BJ (cell line): ENCODE measurements at regions of chr16 and their contacts with region 1.

Region 1: GRCh38 chr16:28218104-28218503 is 6.3 kb upstream of the XPO6 start:
- DNase-seq: no peak
- H3K4me3 ChIP-seq: no peak overlapping the region
- H3K27me3 ChIP-seq: no peaks in the 10 kb centered on the region
- CTCF ChIP-seq: peak; percentile 76

Region 2: DNA sequence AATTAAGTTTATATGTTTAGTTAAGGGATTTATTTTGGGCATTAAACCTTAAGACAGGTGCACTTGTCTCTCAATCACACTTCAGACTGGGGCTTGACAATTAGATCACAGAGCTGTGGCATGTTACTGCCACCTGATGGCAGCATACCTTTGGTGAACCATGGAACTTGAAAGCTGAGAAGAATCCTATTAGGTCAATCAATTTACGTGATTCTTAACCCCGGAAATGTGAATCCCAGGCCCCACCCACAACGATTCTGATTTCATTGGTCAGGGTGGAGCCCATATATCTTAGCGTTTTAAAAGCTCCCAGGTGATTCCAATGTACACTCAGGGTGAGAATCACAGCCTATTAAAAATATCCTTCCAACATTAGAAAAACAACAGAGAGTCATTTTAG is 245.6 kb before region 1 on chr16:
- CTCF ChIA-PET with region 1: interaction called, 12 read pairs
- POLR2A ChIA-PET with region 1: no interaction called
- DNase-seq: no peak
- H3K4me3 ChIP-seq: no peak overlapping the region
- H3K27me3 ChIP-seq: peaks cover 1% of the 10 kb centered on the region
- CTCF ChIP-seq: peak; percentile 43

Region 3: DNA sequence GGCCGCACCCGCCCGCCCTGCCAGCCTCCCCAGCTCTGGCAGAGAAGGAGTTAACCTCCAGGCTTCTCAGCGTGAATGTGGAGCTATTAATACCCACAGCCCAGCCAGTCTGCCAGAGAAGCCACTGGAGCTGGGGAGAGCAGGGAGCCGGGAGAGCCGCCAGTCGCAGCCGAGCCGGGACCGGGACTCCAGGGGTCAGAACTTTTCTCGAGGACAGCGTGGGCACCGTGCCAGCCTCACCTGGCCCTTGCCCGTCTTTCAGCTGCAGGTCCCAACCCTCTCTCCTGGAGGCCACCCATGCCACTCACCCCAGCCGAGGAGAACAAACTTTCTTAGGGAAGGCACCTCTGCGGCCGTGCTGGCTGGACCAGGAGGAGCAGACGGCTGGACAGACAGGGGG is 40.5 kb after region 1 on chr16:
- CTCF ChIA-PET with region 1: no interaction called
- POLR2A ChIA-PET with region 1: interaction called, 13 read pairs
- DNase-seq: no peak
- H3K4me3 ChIP-seq: no peak overlapping the region
- H3K27me3 ChIP-seq: peaks cover 36% of the 10 kb centered on the region
- CTCF ChIP-seq: no peak

Region 4: DNA sequence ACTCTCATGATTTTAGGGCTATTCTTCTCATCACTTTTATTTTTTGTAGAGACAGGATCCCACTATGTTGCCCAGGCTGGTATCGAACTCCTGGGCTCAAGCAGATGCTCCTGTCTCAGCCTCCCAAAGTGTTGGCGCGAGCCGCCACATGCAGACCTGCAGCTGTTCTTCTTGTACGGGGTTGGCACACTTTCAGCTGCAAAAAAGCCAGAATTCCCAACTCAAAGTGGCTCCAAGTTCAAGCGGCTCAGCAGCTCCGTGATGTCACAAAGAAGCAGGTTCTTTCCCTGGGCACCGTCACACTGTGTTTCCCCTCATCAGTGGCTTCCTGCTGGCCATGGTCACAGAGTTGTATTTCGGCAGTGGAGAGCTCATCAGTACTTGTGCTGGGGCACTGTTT is 67.5 kb after region 1 on chr16:
- CTCF ChIA-PET with region 1: no interaction called
- POLR2A ChIA-PET with region 1: no interaction called
- DNase-seq: no peak
- H3K4me3 ChIP-seq: no peak overlapping the region
- H3K27me3 ChIP-seq: peaks cover 11% of the 10 kb centered on the region
- CTCF ChIP-seq: no peak

Region 5: DNA sequence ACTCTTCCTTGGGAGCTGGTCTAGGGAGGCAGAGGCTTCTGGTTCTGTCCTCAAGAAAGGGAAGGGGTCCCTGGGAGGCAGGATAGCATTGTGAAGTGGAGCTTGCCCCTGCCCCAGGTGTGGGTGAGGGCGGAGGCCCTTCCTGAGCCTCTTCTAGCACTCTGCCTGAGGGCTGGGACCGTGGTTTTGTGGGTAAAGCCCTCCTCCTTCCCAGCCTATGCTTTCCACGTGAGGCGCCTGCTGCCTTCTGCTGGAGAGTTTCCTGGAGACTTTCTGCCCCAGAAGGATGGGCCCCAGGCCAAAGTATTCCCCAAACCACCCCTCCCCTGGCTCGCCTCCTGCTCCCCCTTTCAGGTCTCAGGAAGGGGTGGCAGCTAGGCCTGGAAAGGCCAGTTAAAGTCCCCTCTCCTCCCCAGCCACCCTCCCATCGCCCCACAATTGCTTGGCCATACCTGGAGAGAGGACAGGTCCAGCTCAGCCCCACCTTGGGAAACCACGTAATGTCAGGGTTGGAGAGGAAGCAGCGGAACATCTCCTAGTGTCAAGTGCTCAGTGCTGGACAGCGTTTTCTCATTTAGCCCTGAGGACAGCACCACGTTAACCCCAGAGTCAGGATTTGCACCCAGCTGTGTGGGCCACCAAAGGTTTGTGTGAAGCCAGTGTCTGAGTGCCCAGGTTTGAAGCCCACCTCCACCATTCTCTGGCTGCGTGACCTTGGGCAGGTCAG is 79.8 kb after region 1 on chr16:
- CTCF ChIA-PET with region 1: no interaction called
- POLR2A ChIA-PET with region 1: no interaction called
- DNase-seq: no peak
- H3K4me3 ChIP-seq: no peak overlapping the region
- H3K27me3 ChIP-seq: peaks cover 25% of the 10 kb centered on the region
- CTCF ChIP-seq: no peak